ENCODE measurements at regions of chr11 and their contacts with region 1.

Region 1: DNA sequence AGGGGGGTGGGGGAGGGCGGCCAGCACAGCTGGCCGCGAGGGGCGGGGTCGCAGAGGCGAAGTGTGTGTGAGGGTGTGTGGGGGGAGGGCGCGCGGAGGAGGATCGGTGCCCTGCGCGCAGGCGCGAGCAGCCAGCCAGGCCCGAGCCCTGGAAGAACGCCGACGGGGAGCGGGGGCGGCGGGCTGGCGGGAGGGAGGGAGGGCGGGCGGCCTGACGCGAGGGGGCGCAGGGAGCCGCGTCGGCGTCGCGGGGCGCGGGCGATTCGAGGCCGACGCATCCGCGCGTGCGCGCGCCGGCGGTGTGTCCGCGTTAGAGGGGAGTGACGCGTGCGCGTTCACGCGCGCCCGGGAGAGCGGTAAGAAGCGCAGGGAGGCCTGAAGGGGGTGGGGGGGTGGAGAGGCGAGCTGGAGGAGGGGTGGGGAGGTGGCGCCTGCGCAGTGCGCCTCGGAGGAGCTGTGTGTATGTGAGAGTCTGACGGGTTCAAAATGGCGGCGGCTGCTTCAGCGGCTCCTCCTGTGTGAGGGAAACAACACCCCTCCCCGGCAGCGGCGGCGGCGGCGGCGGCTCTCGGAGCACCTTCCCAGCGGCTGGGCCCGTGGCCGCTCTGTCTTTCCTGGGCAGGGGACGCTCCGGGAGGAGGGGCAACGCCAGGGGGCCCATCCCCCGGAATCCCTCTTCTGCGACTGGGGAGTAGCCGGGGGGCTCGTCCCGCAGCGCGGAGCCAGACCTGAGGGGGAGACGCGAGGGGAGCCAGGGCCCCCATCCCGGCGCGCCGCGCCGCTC is at the start of gene KDM2A:
- DNase-seq: peak; percentile 100
- ATAC-seq: peak; percentile 85
- H3K4me3 Mint-ChIP-seq: peak within 1 kb of the TSS; percentile 98
- H3K27ac Mint-ChIP-seq: peak within 1 kb of the TSS; percentile 83
- H3K4me1 Mint-ChIP-seq: peaks cover 28% of the 10 kb centered on the region
- H3K27me3 Mint-ChIP-seq: no peaks in the 10 kb centered on the region
- total RNA-seq, gene KDM2A: 74.8 to 89.7 TPM

Region 2: DNA sequence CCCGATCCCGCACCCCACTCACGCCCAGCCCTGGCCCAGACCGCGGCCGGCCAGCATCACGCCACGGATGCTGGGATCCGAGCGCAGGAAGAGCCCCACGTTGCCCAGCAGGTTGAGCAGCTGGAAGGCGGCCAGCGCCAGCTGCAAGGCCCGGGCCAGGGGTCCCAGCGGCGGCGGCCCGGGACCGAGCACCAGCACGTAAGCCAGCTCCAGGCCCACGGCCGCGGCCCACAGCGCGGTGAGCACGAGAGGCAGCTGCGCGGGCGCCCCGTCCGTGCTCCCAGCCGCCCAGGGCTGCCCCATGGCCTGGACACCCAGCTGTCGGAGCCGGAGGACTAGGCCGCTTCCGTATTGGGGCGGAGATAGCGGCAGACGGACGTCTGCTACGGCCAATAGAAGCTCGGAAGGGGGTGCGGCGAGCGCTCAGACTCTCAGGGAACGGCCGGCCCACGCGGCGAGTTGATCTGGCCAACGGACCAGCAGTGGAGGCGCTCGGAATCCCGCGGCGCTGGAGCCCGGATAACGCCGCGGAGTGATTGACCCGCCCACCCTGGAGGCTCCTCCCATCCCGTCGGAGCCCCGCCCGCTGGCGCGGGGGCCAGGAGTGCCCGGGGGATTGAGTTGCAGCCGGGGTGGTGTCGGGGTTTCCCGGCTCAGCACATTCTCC is 573.2 kb before region 1 on chr11 and contains the start of gene ZDHHC24:
- CTCF ChIA-PET with region 1: no interaction called
- POLR2A ChIA-PET with region 1: no interaction called
- intact Hi-C with region 1: loop called in 1 of 2 experiments (anchors 2 kb)
- DNase-seq: peak; percentile 95
- ATAC-seq: peak; percentile 94
- H3K4me3 Mint-ChIP-seq: peak within 1 kb of the TSS; percentile 76
- H3K27ac Mint-ChIP-seq: peak within 1 kb of the TSS; percentile 67
- H3K4me1 Mint-ChIP-seq: peaks cover 20% of the 10 kb centered on the region
- H3K27me3 Mint-ChIP-seq: peaks cover 5% of the 10 kb centered on the region
- total RNA-seq, gene ZDHHC24: 9.7 to 11.3 TPM

Region 3: DNA sequence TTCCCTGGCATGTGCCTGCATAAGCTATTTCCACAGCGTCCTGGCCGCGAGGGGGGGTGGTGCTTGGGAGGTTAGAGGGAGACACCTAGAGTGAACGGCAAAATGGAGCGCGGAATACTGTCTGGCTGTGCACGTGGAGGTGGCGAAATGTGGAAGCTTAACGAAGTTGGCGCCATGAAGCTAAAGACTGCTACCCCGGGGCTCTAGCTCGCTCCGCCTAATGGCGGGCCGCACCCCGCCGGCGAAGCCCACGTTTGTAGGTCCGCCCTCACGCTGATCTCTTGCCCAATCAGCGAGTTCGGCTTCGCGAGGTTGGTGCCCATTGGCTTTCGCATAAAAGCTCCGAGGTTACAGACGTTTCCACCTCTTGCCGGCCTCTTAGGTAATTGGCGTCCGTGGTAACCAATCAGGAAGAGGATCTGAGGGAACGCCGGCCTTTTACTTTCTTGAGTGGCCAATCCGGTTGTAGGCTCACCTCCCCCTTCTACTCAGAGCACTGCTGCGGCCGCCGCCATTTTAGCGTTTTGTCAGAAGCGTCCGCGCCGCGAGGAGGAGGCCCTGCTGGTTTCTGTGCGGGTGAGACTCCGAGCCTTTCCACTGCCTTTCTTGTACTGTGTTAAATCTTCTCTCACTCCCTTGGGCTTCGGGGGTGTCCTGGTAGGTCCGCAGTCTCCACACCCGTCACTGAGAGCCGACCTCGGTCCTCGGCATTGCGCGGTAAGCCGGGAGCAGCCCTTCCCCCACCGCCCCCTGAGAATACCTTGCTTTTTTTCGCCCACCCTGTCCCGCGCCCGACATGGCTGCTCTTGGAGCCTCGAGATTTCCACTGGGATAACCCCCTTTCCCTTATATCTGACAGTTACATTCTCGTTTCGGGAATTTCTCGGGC is 480.6 kb before region 1 on chr11 and contains the start of gene RBM4:
- CTCF ChIA-PET with region 1: no interaction called
- POLR2A ChIA-PET with region 1: no interaction called
- intact Hi-C with region 1: loop called in 1 of 2 experiments (anchors 5 kb)
- DNase-seq: peak; percentile 97
- ATAC-seq: peak; percentile 95
- H3K4me3 Mint-ChIP-seq: peak within 1 kb of the TSS; percentile 89
- H3K27ac Mint-ChIP-seq: peak within 1 kb of the TSS; percentile 97
- H3K4me1 Mint-ChIP-seq: peaks cover 65% of the 10 kb centered on the region
- H3K27me3 Mint-ChIP-seq: no peaks in the 10 kb centered on the region
- total RNA-seq, gene RBM4: 104 to 122 TPM

Region 4: GRCh38 chr11:67071420-67072284 is 47.3 kb before region 1 on chr11:
- CTCF ChIA-PET with region 1: no interaction called
- POLR2A ChIA-PET with region 1: no interaction called
- intact Hi-C with region 1: no loop called
- DNase-seq: peak; percentile 90
- ATAC-seq: peak; percentile 96
- H3K4me3 Mint-ChIP-seq: no peak overlapping the region
- H3K27ac Mint-ChIP-seq: no peak overlapping the region
- H3K4me1 Mint-ChIP-seq: peaks cover 3% of the 10 kb centered on the region
- H3K27me3 Mint-ChIP-seq: no peaks in the 10 kb centered on the region

Region 5: DNA sequence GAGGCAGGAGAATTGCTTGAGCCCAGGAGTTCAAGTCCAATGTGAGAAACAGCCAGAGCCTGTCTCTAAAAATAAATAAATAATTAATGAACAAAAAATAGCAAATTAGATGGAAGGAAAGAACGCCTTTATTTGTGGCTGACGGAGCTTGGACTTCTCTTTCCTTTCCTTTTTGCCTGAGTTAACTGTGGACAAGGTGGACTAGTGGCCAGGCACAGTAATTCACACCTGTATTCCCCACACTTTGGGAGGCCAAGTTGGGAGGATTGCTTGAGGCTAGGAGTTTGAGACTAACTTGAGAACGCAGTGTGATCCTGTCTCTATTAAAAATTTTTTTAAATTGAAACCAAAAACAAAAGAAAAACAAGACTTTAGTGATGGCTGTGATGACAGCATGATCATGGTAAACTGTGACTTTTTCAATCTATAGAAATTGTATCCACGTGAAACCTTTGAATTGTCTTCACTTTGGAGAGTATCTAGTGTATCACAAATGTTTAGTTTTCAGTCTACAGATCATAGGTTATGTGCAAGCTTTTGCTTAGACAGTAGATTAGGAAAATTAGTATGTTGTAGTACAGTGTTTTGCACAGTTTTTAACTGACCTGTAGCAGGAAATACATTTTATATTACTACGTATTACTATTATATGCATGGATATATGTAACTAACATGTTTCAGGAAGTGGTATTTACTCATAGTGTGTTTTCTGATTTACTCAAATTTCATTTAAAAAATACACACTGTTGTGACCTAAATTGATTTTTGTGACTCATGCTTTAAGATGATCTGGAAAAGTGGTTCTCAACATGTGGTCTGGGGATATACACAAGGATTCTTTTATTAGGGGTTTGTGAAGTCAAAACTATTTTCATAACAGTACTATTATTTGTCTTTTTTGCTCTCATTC is 42.1 kb after region 1 on chr11:
- CTCF ChIA-PET with region 1: interaction called, 3 read pairs
- POLR2A ChIA-PET with region 1: no interaction called
- intact Hi-C with region 1: loop called in 1 of 2 experiments (anchors 5 kb)
- DNase-seq: no peak
- ATAC-seq: peak; percentile 87
- H3K4me3 Mint-ChIP-seq: no peak overlapping the region
- H3K27ac Mint-ChIP-seq: peak overlapping the region; percentile 55
- H3K4me1 Mint-ChIP-seq: peaks cover 52% of the 10 kb centered on the region
- H3K27me3 Mint-ChIP-seq: no peaks in the 10 kb centered on the region

Region 6: GRCh38 chr11:67317205-67317887 is 198.4 kb after region 1 on chr11:
- CTCF ChIA-PET with region 1: no interaction called
- POLR2A ChIA-PET with region 1: no interaction called
- intact Hi-C with region 1: loop called in 1 of 2 experiments (anchors 1 kb)
- DNase-seq: peak; percentile 99
- ATAC-seq: peak; percentile 83
- H3K4me3 Mint-ChIP-seq: peak overlapping the region; percentile 84
- H3K27ac Mint-ChIP-seq: peak overlapping the region; percentile 95
- H3K4me1 Mint-ChIP-seq: peaks cover 28% of the 10 kb centered on the region
- H3K27me3 Mint-ChIP-seq: peaks cover 3% of the 10 kb centered on the region

Region 7: GRCh38 chr11:67482825-67483798 is 364.1 kb after region 1 on chr11 and contains the start of gene AIP:
- CTCF ChIA-PET with region 1: no interaction called
- POLR2A ChIA-PET with region 1: no interaction called
- intact Hi-C with region 1: loop called in 1 of 2 experiments (anchors 1 kb)
- DNase-seq: peak; percentile 99
- ATAC-seq: peak; percentile 72
- H3K4me3 Mint-ChIP-seq: peak within 1 kb of the TSS; percentile 86
- H3K27ac Mint-ChIP-seq: peak within 1 kb of the TSS; percentile 99
- H3K4me1 Mint-ChIP-seq: peaks cover 50% of the 10 kb centered on the region
- H3K27me3 Mint-ChIP-seq: no peaks in the 10 kb centered on the region
- total RNA-seq, gene AIP: 142 to 144 TPM

Measured in activated CD4-positive, alpha-beta T cell treated with anti-CD3 and anti-CD28 coated beads for 36 hours (primary cell).